ENCODE measurements at regions of chr6 and their contacts with region 1.

Region 1: GRCh38 chr6:39892490-39893129 is 41.7 kb downstream of the MOCS1 start:
- DNase-seq: no peak
- H3K4me3 ChIP-seq: no peak overlapping the region
- H3K27ac ChIP-seq: no peak overlapping the region
- H3K4me1 ChIP-seq: no peaks in the 10 kb centered on the region
- H3K27me3 ChIP-seq: no peaks in the 10 kb centered on the region
- CTCF ChIP-seq: peak; percentile 29 to 61 (median 36)
- POLR2A ChIP-seq: no peak

Region 2: DNA sequence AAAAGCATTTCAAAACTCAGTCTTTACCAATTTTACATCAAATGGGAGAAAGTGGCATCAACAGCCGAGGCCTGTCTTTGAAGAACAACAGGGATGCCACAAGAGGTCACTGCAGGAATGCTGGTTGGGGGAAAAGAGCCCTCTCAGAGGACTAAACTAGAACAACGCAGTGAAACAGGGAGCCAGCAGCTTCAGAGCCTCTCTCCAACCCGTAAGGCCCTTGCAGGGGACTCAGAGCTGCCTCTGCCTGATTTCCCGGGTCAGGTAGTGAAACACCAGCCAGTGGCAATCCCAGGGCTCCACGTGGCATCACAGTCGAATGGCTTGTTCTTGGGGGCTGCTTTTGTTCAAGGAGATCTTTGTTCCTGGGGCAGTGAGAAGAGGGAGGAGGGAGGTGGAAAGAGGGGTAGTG is 515.1 kb before region 1 on chr6:
- intact Hi-C with region 1: loop called (anchors 10 kb)
- DNase-seq: no peak
- H3K4me3 ChIP-seq: no peak overlapping the region
- H3K27ac ChIP-seq: no peak overlapping the region
- H3K4me1 ChIP-seq: peaks cover 4% of the 10 kb centered on the region
- H3K27me3 ChIP-seq: no peaks in the 10 kb centered on the region
- CTCF ChIP-seq: peak in 2 of 3 experiments; percentile 41 to 52
- POLR2A ChIP-seq: no peak

Measured in vagina (tissue), 2 donors.